Right cardiac atrium (tissue), 5 donors: ENCODE measurements at regions of chr16 and their contacts with region 1.

Region 1: DNA sequence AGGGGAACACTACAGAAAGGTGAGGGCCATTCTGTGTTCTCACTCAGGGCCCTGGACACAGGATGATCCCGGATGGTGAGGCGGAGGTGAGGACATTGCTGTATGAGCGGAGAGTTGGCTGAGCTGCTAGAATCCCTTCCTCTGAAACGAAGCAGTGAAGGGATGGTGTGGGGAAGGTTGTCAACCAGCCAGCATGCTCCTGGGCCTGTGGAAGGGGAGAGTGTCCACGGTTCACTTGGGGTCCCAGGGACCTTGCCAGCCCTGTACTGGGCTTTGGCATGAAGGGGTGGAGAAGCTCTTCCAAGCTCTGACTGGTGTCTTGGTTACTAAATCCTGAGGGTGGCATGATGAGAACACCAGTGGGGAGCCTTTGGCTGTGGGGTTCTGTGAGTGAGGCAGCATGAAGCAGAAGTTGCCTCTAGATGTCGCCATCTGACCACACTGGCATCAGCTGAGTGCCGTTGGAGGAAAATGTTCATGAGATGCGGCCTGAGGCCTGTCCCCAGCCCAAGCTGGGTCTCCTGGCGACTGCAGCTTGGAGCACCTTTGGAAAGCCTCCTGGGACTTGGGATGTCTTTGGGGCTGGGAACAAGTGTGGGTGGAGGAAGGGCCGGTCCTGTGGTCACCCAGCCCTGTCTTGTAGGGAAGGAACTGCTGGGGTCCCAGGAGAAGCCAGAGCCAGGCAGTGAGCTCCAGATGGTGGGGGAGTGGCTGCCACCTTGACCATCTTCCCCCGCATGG is 14.8 kb downstream of the PDP2 start:
- DNase-seq: peak; percentile 61 to 84 (median 81)
- ATAC-seq: peak; percentile 78 to 82
- H3K4me3 ChIP-seq: no peak overlapping the region
- H3K27ac ChIP-seq: no peak overlapping the region
- H3K4me1 ChIP-seq: peaks cover 8% of the 10 kb centered on the region
- H3K27me3 ChIP-seq: no peaks in the 10 kb centered on the region

Region 2: GRCh38 chr16:66934153-66934838 is 39.2 kb after region 1 on chr16 and contains the start of gene CIAO2B:
- intact Hi-C with region 1: loop called in 2 of 4 experiments (anchors 5 kb)
- DNase-seq: peak; percentile 91 to 97 (median 96)
- ATAC-seq: peak; percentile 86 to 87
- H3K4me3 ChIP-seq: peak within 1 kb of the TSS; percentile 62
- H3K27ac ChIP-seq: peak within 1 kb of the TSS; percentile 84
- H3K4me1 ChIP-seq: peaks cover 3% of the 10 kb centered on the region
- H3K27me3 ChIP-seq: no peaks in the 10 kb centered on the region
- total RNA-seq, gene CIAO2B: 82.8 to 104 (median 100) TPM

Region 3: DNA sequence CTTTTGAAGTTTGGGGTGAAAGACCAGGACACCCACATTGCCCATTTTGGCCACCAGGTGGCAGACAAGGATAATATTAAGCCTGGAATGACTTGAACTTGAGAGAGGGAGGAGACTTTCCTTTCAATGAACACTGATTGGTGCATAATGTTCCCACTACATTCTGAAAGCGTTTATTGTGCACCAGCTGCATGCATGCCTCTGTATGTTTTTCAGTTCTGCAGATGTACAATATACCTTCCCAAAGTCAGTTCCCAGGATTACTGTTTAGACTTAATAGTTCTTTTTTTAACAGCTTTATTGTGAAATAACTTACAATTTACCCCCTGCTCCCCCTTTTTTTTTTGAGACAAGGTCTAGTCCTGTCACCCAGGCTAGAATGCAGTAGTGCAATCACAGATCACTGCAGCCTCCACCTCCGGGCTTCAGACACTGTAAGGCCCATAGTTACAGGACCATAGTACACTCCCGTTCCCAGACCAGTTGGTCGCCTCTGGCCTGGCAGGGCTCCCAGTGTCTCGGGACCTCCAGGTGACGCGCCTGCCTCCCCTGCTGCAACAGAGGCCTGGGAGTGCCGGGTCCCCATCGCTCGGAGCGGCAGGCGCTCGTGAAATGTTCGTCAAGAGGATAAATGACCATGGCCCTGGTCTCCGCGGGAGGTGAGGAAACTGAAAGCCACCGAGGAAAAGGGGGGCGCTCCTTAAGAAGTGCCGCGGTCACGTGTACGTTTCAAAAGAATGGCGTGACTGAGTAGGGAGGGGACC is 52.4 kb after region 1 on chr16:
- intact Hi-C with region 1: loop called in 1 of 4 experiments (anchors 10 kb)
- DNase-seq: peak; percentile 81 to 93 (median 86)
- ATAC-seq: peak; percentile 72 to 76
- H3K4me3 ChIP-seq: peak overlapping the region; percentile 68
- H3K27ac ChIP-seq: no peak overlapping the region
- H3K4me1 ChIP-seq: no peaks in the 10 kb centered on the region
- H3K27me3 ChIP-seq: no peaks in the 10 kb centered on the region